ENCODE measurements at regions of chr11 and their contacts with region 1.

Region 1: DNA sequence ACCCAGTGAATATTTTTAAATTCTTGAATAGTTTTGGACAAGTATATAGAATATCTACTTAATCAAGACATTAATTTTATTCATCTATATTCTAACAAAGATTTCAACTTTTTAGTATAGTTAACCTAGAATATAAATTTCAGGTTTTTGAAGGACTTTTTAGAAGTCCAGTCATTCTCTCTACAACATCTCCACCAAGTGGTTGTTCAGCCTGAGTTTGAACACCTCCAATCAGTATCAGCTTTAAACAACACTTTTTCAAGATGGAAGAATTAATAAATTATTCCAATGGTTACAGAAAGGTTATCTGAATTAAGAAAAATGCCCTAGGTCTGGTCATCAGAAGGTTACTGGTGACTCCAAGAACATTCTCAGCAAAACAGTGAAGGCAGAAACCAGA is 31.8 kb downstream of the EIF3M start:
- DNase-seq: no peak
- H3K4me3 ChIP-seq: no peak overlapping the region
- H3K27ac ChIP-seq: no peak overlapping the region
- H3K4me1 ChIP-seq: no peaks in the 10 kb centered on the region
- H3K27me3 ChIP-seq: no peaks in the 10 kb centered on the region
- CTCF ChIP-seq: no peak
- POLR2A ChIP-seq: no peak

Region 2: GRCh38 chr11:32326522-32326921 is 288.9 kb before region 1 on chr11:
- intact Hi-C with region 1: loop called (anchors 10 kb)
- DNase-seq: no peak
- H3K4me3 ChIP-seq: no peak overlapping the region
- H3K27ac ChIP-seq: no peak overlapping the region
- H3K4me1 ChIP-seq: no peaks in the 10 kb centered on the region
- H3K27me3 ChIP-seq: no peaks in the 10 kb centered on the region
- CTCF ChIP-seq: no peak
- POLR2A ChIP-seq: no peak

Region 3: DNA sequence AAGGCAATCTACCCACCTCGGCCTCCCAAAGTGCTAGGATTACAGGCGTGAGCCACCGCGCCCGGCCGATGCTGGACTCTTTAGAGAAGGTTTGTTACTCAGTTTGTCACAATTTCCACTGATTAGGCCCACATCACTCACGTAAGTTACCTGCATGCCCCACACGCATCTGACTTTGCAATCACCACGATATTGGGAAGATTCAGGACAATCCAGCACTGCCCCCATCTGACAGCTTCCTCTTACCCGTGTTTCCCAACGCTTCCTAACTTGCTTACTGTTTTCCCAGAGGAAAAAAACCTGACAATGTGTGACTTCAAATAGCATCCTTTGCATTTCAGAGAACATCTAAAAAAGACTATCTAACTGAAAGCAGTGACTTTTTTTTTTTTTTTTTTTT is 53.6 kb before region 1 on chr11:
- intact Hi-C with region 1: no loop called
- DNase-seq: no peak
- H3K4me3 ChIP-seq: no peak overlapping the region
- H3K27ac ChIP-seq: no peak overlapping the region
- H3K4me1 ChIP-seq: no peaks in the 10 kb centered on the region
- H3K27me3 ChIP-seq: no peaks in the 10 kb centered on the region
- CTCF ChIP-seq: no peak
- POLR2A ChIP-seq: no peak

Measured in prostate gland (tissue), 2 donors.